Natural killer cell (primary cell): ENCODE measurements at regions of chr7 and their contacts with region 1.

Region 1: GRCh38 chr7:28272461-28272877 is 91.9 kb upstream of the JAZF1 start:
- DNase-seq: peak; percentile 37 to 58
- ATAC-seq: peak; percentile 71 to 89 (median 88)
- H3K4me3 ChIP-seq: no peak overlapping the region
- H3K4me3 Mint-ChIP-seq: peak overlapping the region; percentile 83
- H3K27ac ChIP-seq: no peak overlapping the region
- H3K27ac Mint-ChIP-seq: peak overlapping the region; percentile 79 to 80
- H3K4me1 ChIP-seq: peaks cover 2% of the 10 kb centered on the region
- H3K4me1 Mint-ChIP-seq: peaks cover 17 to 25% of the 10 kb centered on the region in 2 donors
- H3K27me3 ChIP-seq: no peaks in the 10 kb centered on the region
- H3K27me3 Mint-ChIP-seq: peaks cover 9% of the 10 kb centered on the region in 2 donors
- CTCF ChIP-seq: peak; percentile 76

Region 2: GRCh38 chr7:28144266-28144665 is 128.2 kb before region 1 on chr7:
- intact Hi-C with region 1: loop called (anchors 1 kb)
- DNase-seq: no peak
- ATAC-seq: peak in 2 of 3 donors; percentile 46 to 53
- H3K4me3 ChIP-seq: no peak overlapping the region
- H3K4me3 Mint-ChIP-seq: no peak overlapping the region
- H3K27ac ChIP-seq: no peak overlapping the region
- H3K27ac Mint-ChIP-seq: peak overlapping the region; percentile 43 to 68
- H3K4me1 ChIP-seq: peaks cover under 1% of the 10 kb centered on the region
- H3K4me1 Mint-ChIP-seq: peaks cover 62 to 69% of the 10 kb centered on the region in 2 donors
- H3K27me3 ChIP-seq: no peaks in the 10 kb centered on the region
- H3K27me3 Mint-ChIP-seq: no peaks in the 10 kb centered on the region
- CTCF ChIP-seq: peak; percentile 22

Region 3: DNA sequence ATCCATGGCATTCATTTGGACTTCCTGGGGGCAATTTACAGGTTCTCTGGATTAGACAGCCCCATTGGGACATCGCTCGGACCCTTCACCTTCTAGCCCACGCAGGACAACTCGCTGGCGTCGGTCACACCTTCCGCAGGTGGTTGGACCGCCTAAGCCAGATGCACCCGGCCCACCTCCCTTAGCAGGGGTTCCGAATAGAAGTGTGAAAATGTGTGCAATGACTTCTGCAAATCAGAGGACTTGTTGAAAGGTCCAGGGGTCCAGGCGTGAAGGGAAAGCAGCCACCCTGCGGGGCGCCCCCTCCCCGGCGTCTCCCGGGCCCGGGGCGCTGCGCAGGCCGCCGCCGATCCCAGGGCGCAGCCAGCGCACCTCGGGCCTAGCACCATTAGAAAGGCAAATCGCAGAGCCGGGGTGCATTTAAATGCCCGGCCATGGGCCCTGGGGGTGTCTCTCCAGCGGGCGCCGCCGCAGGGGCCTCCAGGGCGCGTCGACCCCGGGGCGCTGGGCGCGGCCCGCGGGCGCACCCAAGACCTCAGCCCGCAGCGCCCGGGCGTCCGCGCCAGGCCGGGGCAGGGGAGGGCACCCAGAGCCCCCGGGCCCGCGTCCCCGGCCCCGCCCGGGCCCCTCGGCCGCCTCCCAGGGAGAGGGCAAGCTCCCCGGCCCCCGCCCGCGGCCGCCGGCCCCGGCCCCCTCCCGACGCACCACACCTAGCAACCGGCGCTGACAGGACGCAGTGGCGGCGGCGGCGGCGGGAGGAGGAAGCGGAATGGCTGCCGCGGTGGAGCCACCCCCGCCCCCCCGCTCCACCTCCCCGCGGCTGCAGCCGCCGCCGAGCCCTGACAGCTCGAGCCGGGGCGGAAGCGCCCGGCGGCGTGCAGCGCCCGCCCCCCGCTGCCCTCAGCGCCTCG is 93.1 kb before region 1 on chr7:
- intact Hi-C with region 1: loop called (anchors 2 kb)
- DNase-seq: peak; percentile 75 to 81
- ATAC-seq: peak; percentile 55 to 83 (median 71)
- H3K4me3 ChIP-seq: peak overlapping the region; percentile 27
- H3K4me3 Mint-ChIP-seq: peak overlapping the region; percentile 86
- H3K27ac ChIP-seq: peak overlapping the region; percentile 59
- H3K27ac Mint-ChIP-seq: peak overlapping the region; percentile 85 to 98
- H3K4me1 ChIP-seq: peaks cover 23% of the 10 kb centered on the region
- H3K4me1 Mint-ChIP-seq: peaks cover 61 to 68% of the 10 kb centered on the region in 2 donors
- H3K27me3 ChIP-seq: no peaks in the 10 kb centered on the region
- H3K27me3 Mint-ChIP-seq: no peaks in the 10 kb centered on the region
- CTCF ChIP-seq: no peak

Region 4: DNA sequence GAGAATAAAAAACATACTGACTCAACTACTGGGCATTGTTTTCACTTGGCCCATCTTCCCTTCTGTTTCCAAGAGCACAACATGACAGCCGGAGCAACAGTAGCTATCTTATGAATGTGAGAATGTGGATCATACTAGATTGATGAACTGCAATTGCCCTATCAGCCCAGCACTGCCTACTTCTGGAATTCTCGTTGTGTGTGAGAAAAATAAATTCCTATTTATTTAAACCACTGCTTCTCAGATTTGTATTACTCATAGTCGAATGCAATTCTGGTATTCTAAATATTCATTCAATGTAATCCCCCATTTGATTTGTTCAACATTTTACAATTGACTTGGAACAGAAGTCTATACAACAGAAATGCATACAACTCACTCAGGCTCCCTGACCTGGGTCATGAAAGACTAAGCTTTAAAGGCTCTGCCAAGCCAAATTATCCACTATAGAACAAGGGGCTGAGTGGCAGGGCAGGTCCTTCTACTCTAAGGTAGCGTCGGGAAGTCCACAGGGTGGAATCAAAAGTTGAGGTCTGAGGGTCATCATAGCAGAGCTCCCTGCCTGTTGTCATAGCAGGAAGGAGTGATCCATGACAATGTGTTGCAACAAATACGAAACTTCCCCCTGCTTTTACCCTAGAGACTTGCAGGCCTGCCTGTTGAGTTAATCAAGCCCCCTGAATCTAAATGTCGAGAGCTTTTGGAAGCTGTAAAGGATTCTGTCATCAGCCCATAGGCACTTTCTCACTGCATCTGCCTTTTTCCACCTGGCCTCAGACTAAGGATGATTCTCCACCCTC is 79.5 kb before region 1 on chr7:
- intact Hi-C with region 1: no loop called
- DNase-seq: no peak
- ATAC-seq: no peak
- H3K4me3 ChIP-seq: no peak overlapping the region
- H3K4me3 Mint-ChIP-seq: no peak overlapping the region
- H3K27ac ChIP-seq: no peak overlapping the region
- H3K27ac Mint-ChIP-seq: peak overlapping the region in 1 of 2 donors; percentile 18
- H3K4me1 ChIP-seq: peaks cover 27% of the 10 kb centered on the region
- H3K4me1 Mint-ChIP-seq: peaks cover 61 to 67% of the 10 kb centered on the region in 2 donors
- H3K27me3 ChIP-seq: no peaks in the 10 kb centered on the region
- H3K27me3 Mint-ChIP-seq: no peaks in the 10 kb centered on the region
- CTCF ChIP-seq: no peak

Region 5: GRCh38 chr7:28207486-28208158 is 64.8 kb before region 1 on chr7:
- intact Hi-C with region 1: loop called (anchors 5 kb)
- DNase-seq: peak in 1 of 2 donors; percentile 30
- ATAC-seq: peak in 2 of 3 donors; percentile 32 to 41
- H3K4me3 ChIP-seq: no peak overlapping the region
- H3K4me3 Mint-ChIP-seq: peak overlapping the region; percentile 75
- H3K27ac ChIP-seq: peak overlapping the region; percentile 58
- H3K27ac Mint-ChIP-seq: peak overlapping the region; percentile 73 to 96
- H3K4me1 ChIP-seq: peaks cover 31% of the 10 kb centered on the region
- H3K4me1 Mint-ChIP-seq: peaks cover 73 to 77% of the 10 kb centered on the region in 2 donors
- H3K27me3 ChIP-seq: no peaks in the 10 kb centered on the region
- H3K27me3 Mint-ChIP-seq: no peaks in the 10 kb centered on the region
- CTCF ChIP-seq: no peak

Region 6: GRCh38 chr7:28298870-28299518 is 26.5 kb after region 1 on chr7:
- intact Hi-C with region 1: no loop called
- DNase-seq: no peak
- ATAC-seq: no peak
- H3K4me3 ChIP-seq: no peak overlapping the region
- H3K4me3 Mint-ChIP-seq: no peak overlapping the region
- H3K27ac ChIP-seq: no peak overlapping the region
- H3K27ac Mint-ChIP-seq: no peak overlapping the region
- H3K4me1 ChIP-seq: no peaks in the 10 kb centered on the region
- H3K4me1 Mint-ChIP-seq: no peaks in the 10 kb centered on the region
- H3K27me3 ChIP-seq: no peaks in the 10 kb centered on the region
- H3K27me3 Mint-ChIP-seq: peaks cover 6 to 7% of the 10 kb centered on the region in 2 donors
- CTCF ChIP-seq: no peak